HepG2 (cell line): ENCODE measurements at regions of chr19 and their contacts with region 1.

Region 1: DNA sequence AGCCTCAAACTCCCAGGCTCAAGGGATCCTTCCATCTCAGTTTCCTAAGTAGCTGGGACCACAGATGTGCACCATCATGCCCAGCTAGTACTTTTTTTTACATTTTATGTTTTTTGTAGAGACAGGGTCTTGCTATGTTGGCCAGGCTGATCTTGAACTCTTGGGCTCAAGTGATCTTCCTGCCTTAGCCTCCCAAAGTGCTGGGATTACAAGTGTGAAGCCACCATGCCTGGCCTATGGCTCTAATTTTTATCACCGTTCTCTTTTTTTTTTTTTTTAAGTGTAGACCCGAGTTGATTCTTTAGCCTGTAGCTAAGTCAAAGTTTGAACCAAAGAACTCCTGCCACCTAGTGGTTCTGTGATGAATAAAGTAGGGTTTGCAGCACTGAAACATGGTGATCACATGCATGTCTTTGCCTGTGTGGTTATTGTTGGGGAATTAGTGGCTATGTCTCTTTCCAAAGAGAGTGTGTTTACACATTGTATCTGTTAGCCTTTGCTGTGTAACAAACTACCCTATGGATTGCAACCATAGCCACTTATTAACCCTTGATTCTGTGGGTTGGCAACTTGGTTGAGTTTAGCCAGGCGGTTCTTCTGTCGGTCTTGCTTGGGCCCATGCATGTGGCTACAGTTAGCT is 11.6 kb downstream of the NFILZ start:
- DNase-seq: peak; percentile 71
- ATAC-seq: no peak
- H3K4me3 ChIP-seq: no peak overlapping the region
- H3K27ac ChIP-seq: no peak overlapping the region
- H3K4me1 ChIP-seq: peaks cover 58% of the 10 kb centered on the region
- H3K27me3 ChIP-seq: no peaks in the 10 kb centered on the region
- CTCF ChIP-seq: peak; percentile 63
- EP300 ChIP-seq: no peak
- POLR2A ChIP-seq: no peak
- RAD21 ChIP-seq: no peak

Region 2: DNA sequence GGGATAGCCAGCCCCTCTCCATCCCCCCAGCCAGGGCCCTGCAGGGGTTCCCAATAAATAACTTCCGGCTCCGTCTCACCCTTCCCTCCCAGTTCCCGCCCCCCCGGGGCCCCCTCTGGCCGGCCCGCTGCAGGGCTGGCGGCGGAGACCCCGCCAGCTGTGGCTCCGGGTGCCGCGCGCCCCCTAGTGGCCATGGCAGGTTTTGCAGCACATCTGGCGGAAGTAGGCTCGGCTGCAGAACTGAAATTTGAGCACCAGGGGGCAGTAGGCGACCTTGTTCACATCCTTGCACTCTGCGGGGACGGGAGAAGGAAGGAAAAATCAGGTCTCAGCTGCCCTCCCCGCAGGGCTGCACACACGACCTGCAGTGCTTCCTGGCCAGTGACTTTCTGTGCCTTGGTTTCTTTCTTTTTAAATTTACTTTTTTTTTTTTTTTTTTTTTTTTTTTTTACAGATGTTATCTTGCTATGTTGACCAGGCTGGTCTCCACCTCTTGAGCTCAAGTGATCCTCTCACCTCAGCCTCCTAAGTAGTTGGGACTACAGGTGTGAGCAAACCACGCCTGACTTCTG is 61.2 kb before region 1 on chr19:
- CTCF ChIA-PET with region 1: interaction called, 35 read pairs
- POLR2A ChIA-PET with region 1: interaction called, 3 read pairs
- in situ Hi-C with region 1: no loop called
- intact Hi-C with region 1: no loop called
- DNase-seq: peak; percentile 63
- ATAC-seq: peak; percentile 71
- H3K4me3 ChIP-seq: no peak overlapping the region; a peak in 1 of 6 replicates
- H3K27ac ChIP-seq: no peak overlapping the region
- H3K4me1 ChIP-seq: peaks cover 40% of the 10 kb centered on the region
- H3K27me3 ChIP-seq: peaks cover 0 to 11% of the 10 kb centered on the region in 2 experiments; a peak in 2 of 5 replicates
- CTCF ChIP-seq: peak; percentile 95
- EP300 ChIP-seq: no peak
- POLR2A ChIP-seq: no peak
- RAD21 ChIP-seq: peak; percentile 92

Region 3: GRCh38 chr19:8615813-8616596 is 26.0 kb before region 1 on chr19:
- CTCF ChIA-PET with region 1: interaction called, 45 read pairs
- POLR2A ChIA-PET with region 1: interaction called, 3 read pairs
- in situ Hi-C with region 1: no loop called
- intact Hi-C with region 1: loop called (anchors 1 kb)
- DNase-seq: peak; percentile 62
- ATAC-seq: peak; percentile 43; the same call in 2 of the 3 replicates
- H3K4me3 ChIP-seq: no peak overlapping the region
- H3K27ac ChIP-seq: no peak overlapping the region
- H3K4me1 ChIP-seq: peaks cover 22% of the 10 kb centered on the region
- H3K27me3 ChIP-seq: no peaks in the 10 kb centered on the region
- CTCF ChIP-seq: peak; percentile 86
- EP300 ChIP-seq: no peak
- POLR2A ChIP-seq: no peak
- RAD21 ChIP-seq: peak; percentile 73

Region 4: GRCh38 chr19:8631425-8631819 is 10.6 kb before region 1 on chr19:
- CTCF ChIA-PET with region 1: no interaction called
- POLR2A ChIA-PET with region 1: interaction called, 38 read pairs
- in situ Hi-C with region 1: no loop called
- intact Hi-C with region 1: no loop called
- DNase-seq: peak; percentile 86
- ATAC-seq: peak; percentile 95
- H3K4me3 ChIP-seq: peak overlapping the region in 2 of 3 experiments; percentile 37 to 56; a peak in 3 of 6 replicates
- H3K27ac ChIP-seq: peak overlapping the region; percentile 81
- H3K4me1 ChIP-seq: peaks cover 49% of the 10 kb centered on the region
- H3K27me3 ChIP-seq: no peaks in the 10 kb centered on the region
- CTCF ChIP-seq: no peak
- EP300 ChIP-seq: peak in 1 of 2 experiments; percentile 79; a peak in 2 of 4 replicates
- POLR2A ChIP-seq: peak in 1 of 2 experiments; percentile 37; a peak in 1 of 4 replicates
- RAD21 ChIP-seq: no peak